ENCODE measurements at regions of chr1 and their contacts with region 1.

Region 1: DNA sequence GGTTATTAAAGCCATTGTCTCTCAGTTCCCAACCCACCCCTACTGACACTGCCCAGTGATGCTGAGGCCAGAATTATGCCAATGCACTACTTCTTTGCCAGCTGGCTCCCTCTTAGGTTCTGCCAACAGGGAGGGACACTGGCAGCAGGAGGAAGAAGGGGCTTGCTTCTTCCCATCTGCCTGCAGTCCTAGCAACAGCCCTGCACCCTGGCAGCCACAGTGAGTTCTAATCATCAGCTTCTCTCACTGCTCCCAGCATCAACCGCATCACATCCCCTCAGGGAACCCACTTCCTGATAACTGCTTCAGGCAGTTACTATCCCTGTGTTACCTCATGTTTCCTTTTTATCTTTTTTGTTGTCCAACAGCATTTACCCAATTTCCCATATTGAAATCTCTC is 86.2 kb downstream of the UBR4 start:
- DNase-seq: peak; percentile 78
- H3K4me3 Mint-ChIP-seq: peak overlapping the region; percentile 58
- H3K27ac Mint-ChIP-seq: peak overlapping the region; percentile 84
- H3K4me1 Mint-ChIP-seq: peaks cover 34% of the 10 kb centered on the region
- H3K27me3 Mint-ChIP-seq: no peaks in the 10 kb centered on the region

Region 2: GRCh38 chr1:18949686-18950400 is 174.0 kb before region 1 on chr1:
- intact Hi-C with region 1: no loop called
- DNase-seq: peak; percentile 76
- H3K4me3 Mint-ChIP-seq: peak overlapping the region; percentile 78
- H3K27ac Mint-ChIP-seq: peak overlapping the region; percentile 98
- H3K4me1 Mint-ChIP-seq: peaks cover 90% of the 10 kb centered on the region
- H3K27me3 Mint-ChIP-seq: no peaks in the 10 kb centered on the region

Region 3: DNA sequence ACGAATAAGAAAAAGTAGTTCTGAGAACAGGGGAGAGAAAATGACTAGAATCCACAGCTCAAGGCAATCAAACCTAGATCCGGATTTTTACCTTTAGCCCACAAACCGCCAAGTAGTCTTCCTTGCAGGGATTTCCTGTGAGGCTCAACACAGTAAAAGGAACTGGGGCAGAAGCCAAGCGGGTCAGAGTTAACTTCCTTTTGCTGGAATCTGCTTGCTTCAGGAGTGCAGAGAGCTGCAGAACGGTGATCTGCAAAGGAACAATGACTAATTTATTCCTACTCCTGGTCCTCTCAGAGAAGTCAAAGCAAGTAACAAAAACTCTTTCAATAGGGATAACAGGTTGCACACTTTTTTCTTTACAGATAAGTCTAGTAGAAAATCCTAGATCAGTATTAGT is 32.8 kb after region 1 on chr1:
- intact Hi-C with region 1: loop called (anchors 5 kb)
- DNase-seq: no peak
- H3K4me3 Mint-ChIP-seq: no peak overlapping the region
- H3K27ac Mint-ChIP-seq: peak overlapping the region; percentile 40
- H3K4me1 Mint-ChIP-seq: peaks cover 8% of the 10 kb centered on the region
- H3K27me3 Mint-ChIP-seq: no peaks in the 10 kb centered on the region

Measured in activated CD4-positive, alpha-beta T cell treated with anti-CD3 and anti-CD28 coated beads, Interleukin-2, amount 10 ng/mL, durations not matched to agents 24 days and 14 days (primary cell).